ENCODE measurements at regions of chr10 and their contacts with region 1.

Region 1: DNA sequence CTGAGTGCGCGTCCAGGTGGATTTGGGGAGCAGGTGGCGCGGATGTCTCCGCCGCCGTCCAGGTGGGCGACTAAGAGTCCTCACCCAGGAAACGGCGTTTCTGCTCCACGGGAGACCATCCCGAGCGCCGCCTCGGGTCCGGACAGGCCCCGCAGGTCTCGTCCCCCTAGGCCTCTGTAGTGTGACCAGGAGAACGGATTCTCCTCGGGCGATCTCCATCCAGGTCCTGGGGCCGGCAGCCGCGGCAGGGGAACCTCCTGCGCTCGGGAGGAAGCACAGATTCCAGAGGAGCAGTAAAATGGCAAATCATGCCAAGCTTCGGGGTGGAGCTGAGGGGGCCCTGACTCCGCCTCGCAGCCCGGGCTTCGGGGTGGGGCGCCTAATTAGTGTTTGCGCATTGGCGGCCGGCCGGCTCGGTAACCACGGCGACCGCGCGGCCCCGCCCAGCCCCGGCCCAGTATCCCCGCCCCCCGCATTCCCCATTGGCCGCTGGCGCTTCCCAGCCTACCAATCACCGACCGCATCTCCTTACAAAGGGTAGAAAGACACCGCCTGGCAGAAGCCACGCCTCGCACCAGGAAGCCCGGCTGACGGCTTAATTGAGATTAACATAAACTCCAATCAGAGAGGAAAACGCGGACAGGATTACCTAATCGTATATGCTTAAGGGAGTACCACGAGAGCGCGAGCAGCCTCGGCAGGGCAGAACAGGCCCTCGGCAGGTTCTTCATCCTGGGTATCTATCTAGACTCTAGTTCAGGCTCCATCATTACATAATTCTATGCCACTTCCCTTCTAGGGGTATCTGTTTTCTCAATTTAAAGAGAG is 168.6 kb downstream of the ARHGAP12 start:
- DNase-seq: peak; percentile 99
- H3K4me3 ChIP-seq: peak overlapping the region; percentile 71 to 80
- H3K27ac ChIP-seq: peak overlapping the region; percentile 97
- H3K4me1 ChIP-seq: peaks cover 33% of the 10 kb centered on the region
- H3K27me3 ChIP-seq: no peaks in the 10 kb centered on the region
- CTCF ChIP-seq: no peak
- POLR2A ChIP-seq: peak in 1 of 2 donors; percentile 96

Region 2: GRCh38 chr10:30783939-30784500 is 976.0 kb before region 1 on chr10:
- intact Hi-C with region 1: loop called (anchors 1 kb)
- DNase-seq: no peak
- H3K4me3 ChIP-seq: peak overlapping the region; percentile 52 to 67
- H3K27ac ChIP-seq: peak overlapping the region; percentile 90
- H3K4me1 ChIP-seq: peaks cover 34% of the 10 kb centered on the region
- H3K27me3 ChIP-seq: no peaks in the 10 kb centered on the region
- CTCF ChIP-seq: peak; percentile 50 to 90 (median 87)
- POLR2A ChIP-seq: no peak

Region 3: GRCh38 chr10:31031558-31032257 is 728.3 kb before region 1 on chr10 and contains the start of gene ZNF438:
- intact Hi-C with region 1: loop called (anchors 2 kb)
- DNase-seq: peak; percentile 97
- H3K4me3 ChIP-seq: peak within 1 kb of the TSS; percentile 61
- H3K27ac ChIP-seq: peak within 1 kb of the TSS; percentile 100
- H3K4me1 ChIP-seq: peaks cover 53% of the 10 kb centered on the region
- H3K27me3 ChIP-seq: no peaks in the 10 kb centered on the region
- CTCF ChIP-seq: peak in 2 of 3 experiments; percentile 33 to 45
- POLR2A ChIP-seq: peak in 1 of 2 donors; percentile 53
- total RNA-seq, gene ZNF438: 11.8 TPM

Region 4: GRCh38 chr10:31536302-31536701 is 223.7 kb before region 1 on chr10:
- intact Hi-C with region 1: no loop called
- DNase-seq: no peak
- H3K4me3 ChIP-seq: no peak overlapping the region
- H3K27ac ChIP-seq: no peak overlapping the region
- H3K4me1 ChIP-seq: no peaks in the 10 kb centered on the region
- H3K27me3 ChIP-seq: no peaks in the 10 kb centered on the region
- CTCF ChIP-seq: no peak
- POLR2A ChIP-seq: no peak

Region 5: DNA sequence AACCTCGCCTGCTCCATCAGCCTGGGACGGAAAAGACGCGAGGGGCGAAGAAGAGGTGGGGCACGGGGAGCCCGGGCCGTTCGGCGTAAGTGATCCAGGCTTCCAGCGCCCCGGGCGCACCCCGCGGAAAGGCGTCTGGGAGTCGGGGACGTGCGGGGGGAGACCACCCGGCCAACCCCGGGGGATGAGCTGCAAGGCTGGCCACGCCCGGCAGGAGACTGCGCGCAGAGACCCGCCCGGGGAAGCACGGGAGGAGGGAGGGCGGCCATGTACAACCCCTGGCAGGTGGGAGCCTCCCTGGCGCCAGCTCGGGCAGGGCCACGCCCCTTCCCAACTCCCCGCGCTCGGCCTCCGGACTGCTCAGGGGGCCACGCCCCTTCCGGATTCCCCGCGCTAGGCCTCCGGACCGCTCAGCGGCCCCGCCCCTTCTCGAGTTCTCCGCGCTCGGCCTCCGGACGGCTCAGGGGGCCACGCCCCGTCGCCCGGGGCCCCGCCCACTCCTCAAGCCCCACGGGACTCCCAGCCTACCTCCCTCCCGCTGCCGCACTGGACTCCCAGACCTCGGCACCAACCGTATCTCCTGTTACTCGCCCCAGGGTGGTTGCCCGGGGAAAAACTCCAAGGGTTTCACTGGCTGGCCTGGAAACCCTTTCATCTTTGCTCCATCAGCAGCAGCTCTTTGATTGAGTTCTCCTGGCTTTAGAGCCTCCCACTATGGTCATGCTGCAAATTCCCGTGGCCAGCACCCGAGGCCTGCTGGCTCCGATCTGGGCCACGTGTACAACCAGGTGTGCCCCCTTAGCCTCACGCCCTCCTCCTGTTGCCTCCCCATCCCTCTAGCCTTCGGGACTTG is 156.6 kb before region 1 on chr10:
- intact Hi-C with region 1: loop called (anchors 5 kb)
- DNase-seq: peak in 1 of 2 donors; percentile 96
- H3K4me3 ChIP-seq: peak overlapping the region; percentile 60 to 74
- H3K27ac ChIP-seq: peak overlapping the region; percentile 92
- H3K4me1 ChIP-seq: peaks cover 43% of the 10 kb centered on the region
- H3K27me3 ChIP-seq: no peaks in the 10 kb centered on the region
- CTCF ChIP-seq: peak in 1 of 3 experiments; percentile 16
- POLR2A ChIP-seq: peak in 1 of 2 donors; percentile 48

Region 6: DNA sequence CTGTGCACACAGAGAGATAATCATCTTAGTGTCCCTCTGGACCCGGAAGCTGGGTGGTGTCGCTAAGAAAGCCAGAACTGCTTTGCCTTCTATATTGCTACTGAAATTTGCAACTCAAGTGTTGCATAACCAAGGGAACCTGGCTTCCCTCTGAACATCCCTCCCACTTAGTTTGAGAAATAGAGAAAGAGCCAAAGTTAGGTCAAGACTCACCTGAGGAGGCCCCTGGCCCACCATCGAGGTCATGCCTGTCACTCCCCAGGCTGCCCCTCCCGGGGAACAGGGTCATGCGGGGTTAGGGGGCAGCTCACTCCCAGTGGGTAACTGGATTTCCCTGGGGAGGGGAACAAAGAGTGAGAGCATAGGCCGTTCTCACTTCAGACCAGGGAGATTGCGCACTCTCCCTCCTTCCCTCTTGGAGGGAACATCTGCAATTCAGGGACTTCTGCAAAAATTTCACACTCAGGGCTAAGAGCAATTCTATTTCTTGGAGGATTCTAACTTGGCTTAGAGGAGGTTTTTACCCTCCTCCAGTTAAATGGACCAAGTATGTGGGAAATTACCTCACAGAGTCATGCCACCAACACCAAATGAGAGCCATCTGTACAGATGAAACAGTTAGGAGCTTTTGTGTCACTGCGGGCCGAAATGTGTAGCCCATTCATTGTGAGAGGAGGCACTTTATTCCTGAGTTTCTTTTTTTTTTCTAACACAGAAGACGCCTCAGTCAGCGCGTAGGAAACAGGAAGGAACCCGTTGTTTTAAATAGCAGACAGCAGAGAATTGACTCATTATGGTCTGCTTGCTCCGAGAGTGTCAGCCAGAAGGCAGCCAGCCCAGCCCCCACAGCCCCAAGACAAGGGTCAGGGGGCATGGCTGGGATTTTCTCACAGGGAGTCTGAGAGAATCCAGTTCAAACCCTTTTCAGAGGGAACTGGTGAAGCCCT is 52.6 kb before region 1 on chr10:
- intact Hi-C with region 1: loop called (anchors 5 kb)
- DNase-seq: no peak
- H3K4me3 ChIP-seq: peak overlapping the region; percentile 1 to 16
- H3K27ac ChIP-seq: peak overlapping the region; percentile 79
- H3K4me1 ChIP-seq: peaks cover 46% of the 10 kb centered on the region
- H3K27me3 ChIP-seq: no peaks in the 10 kb centered on the region
- CTCF ChIP-seq: no peak
- POLR2A ChIP-seq: no peak

Region 7: DNA sequence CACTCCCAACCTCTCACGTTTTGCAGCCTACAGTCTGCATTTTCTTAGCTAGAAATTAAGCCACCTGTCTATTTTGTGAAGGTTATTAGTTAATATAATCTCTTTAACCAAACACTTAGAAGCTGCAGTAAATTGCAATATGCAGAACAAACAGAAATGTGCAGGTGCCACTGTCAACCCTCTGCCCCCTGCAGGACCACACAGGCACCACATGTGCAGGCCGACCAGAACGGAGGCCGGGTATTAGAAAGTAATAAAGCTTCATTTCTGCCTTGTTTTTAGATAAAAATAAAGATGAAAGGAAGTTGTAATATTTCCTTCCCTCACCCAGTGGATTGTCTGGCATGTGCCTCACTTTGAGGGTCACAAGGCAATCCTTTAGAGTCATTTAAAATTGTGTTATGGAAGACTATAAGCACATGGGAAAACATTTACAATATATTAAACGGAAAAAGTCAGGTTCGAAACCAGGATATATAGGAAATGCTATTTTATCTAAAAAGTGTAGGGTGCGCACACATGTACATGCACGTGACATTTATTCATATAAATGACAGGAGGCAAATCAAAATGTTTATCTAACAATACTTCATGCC is 10.4 kb after region 1 on chr10:
- intact Hi-C with region 1: no loop called
- DNase-seq: no peak
- H3K4me3 ChIP-seq: no peak overlapping the region
- H3K27ac ChIP-seq: no peak overlapping the region
- H3K4me1 ChIP-seq: no peaks in the 10 kb centered on the region
- H3K27me3 ChIP-seq: no peaks in the 10 kb centered on the region
- CTCF ChIP-seq: peak in 2 of 3 experiments; percentile 33 to 65
- POLR2A ChIP-seq: no peak

Measured in vagina (tissue), 2 donors.